Colonic mucosa (tissue), 4 donors: ENCODE measurements at regions of chr2 and their contacts with region 1.

Region 1: DNA sequence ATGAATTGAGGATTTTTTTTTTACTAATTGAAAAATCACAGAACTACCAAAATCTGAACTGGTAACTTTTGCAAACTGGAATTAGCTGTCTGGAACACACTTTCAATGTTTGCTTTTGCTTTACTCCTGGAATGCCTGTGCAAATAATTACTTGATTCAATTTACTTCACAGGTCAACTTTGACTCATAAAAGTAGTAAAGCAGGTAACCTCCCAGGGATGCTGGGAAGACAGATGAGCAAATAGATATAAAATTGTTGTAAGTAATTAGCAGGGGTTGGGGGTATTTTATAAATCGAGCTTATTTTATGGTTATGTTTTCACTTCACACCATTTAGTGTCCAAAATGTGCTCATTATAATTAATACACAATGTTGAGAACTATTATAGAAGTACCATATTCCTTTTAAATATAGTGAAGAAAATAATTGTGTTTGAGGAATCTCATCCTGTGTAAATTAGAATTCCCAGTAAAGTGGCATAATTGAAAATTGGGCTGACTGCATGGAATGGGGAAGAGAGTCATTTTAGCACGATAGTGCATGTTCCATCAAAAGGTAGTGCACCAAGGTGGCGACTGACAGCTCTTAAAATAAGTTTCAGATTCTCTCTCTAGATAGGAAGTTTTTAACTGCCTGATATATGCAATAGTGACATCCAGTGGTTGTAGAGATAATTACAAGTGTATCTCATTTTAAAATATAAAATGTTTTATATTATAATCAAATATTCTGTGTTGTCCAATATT is 398.1 kb upstream of the HNRNPA3 start:
- DNase-seq: no peak
- H3K4me3 ChIP-seq: no peak overlapping the region
- H3K27ac ChIP-seq: no peak overlapping the region
- H3K4me1 ChIP-seq: no peaks in the 10 kb centered on the region
- H3K27me3 ChIP-seq: peaks cover 3% of the 10 kb centered on the region
- CTCF ChIP-seq: peak; percentile 43

Region 2: DNA sequence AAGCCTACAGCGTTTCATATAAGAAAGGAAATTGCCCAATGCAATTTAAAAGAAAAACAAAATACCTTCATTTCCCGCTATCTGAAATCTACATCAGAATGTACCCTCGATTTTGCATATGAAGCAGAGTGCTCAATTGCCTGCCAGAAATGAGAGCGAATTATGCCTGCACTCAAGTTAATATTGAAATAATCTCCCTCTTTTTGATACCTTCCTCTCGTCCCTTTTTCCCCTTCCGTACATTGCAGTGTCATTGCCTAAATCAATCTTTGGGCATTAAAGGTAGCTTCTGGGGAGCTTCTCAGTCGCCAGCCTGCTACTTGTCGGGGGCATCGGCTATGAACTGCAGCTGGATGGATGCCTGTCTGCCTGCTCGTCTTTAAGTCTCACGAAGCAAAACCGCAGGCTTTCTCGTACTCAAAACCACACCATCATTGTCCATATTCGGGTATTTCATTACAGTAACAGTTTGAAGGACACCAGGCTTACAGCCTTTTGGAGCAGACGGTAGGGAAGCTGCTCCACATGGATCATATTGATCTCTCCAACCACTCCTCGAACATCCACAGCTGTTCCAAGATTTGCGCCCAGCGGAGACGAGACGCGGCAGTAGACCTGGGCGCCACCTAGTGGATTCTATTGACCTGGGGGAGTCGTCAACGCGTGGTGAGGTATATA is 334.1 kb after region 1 on chr2:
- intact Hi-C with region 1: loop called (anchors 10 kb)
- DNase-seq: peak; percentile 87
- H3K4me3 ChIP-seq: peak overlapping the region; percentile 36
- H3K27ac ChIP-seq: no peak overlapping the region
- H3K4me1 ChIP-seq: no peaks in the 10 kb centered on the region
- H3K27me3 ChIP-seq: peaks cover 5% of the 10 kb centered on the region
- CTCF ChIP-seq: peak; percentile 64